Tibial artery (tissue), 4 donors: ENCODE measurements at regions of chr12 and their contacts with region 1.

Region 1: DNA sequence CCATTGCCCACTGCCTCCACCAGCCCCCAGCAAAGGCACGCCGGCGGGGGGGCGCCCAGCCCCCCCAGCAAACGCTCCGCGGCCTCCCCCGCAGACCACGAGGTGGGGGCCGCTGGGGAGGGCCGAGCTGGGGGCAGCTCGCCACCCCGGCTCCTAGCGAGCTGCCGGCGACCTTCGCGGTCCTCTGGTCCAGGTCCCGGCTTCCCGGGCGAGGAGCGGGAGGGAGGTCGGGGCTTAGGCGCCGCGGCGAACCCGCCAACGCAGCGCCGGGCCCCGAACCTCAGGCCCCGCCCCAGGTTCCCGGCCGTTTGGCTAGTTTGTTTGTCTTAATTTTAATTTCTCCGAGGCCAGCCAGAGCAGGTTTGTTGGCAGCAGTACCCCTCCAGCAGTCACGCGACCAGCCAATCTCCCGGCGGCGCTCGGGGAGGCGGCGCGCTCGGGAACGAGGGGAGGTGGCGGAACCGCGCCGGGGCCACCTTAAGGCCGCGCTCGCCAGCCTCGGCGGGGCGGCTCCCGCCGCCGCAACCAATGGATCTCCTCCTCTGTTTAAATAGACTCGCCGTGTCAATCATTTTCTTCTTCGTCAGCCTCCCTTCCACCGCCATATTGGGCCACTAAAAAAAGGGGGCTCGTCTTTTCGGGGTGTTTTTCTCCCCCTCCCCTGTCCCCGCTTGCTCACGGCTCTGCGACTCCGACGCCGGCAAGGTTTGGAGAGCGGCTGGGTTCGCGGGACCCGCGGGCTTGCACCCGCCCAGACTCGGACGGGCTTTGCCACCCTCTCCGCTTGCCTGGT is at the start of gene CDKN1B:
- DNase-seq: peak; percentile 94 to 98
- H3K4me3 ChIP-seq: peak within 1 kb of the TSS; percentile 83 to 99
- H3K27ac ChIP-seq: peak within 1 kb of the TSS; percentile 99 to 100
- H3K4me1 ChIP-seq: peaks cover 0 to 51% (median 30%) of the 10 kb centered on the region in 4 donors
- H3K27me3 ChIP-seq: no peaks in the 10 kb centered on the region
- CTCF ChIP-seq: no peak

Region 2: DNA sequence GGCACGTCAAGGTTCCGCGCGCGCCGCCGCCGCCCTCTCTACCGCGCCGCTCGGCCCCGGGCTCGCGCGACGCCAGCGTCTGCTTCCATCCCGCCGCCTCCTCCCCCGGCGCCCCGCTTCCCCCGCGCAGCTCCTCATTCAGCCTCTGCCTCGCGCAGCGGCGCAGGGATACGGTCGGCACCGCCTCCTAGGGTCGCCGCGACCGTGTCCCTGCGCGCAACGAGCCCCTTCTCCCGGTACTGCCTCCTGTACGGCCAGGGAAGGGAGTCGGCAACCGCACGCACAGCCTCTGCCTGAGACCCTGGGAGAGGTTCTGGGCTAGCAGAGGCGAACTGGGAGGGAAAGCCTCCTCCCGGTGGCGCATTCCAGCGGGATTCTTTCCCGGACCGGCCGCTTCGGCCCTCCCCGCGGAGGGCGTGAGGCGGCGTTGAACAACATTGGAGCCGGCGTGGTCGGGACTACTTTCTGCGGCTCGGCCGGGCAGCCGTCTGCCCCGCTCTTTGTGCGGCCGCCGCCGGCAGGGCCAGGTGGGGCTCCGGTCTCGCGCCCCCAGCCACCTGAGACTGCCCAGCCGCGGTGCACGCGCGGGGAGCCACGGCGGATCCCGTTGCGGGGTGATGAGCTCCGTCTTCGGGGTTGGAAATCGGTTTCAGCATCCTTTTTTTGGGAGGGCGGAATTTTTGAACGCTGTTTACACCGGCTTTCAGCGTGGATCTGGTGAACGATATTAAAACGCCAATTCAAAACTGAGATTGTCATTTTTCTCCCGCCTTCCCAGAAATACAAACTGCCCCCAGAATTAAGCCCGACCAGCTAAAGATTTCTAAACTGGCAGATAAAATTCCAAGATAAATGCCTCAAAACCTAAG is 449.9 kb before region 1 on chr12 and contains the start of gene LRP6:
- intact Hi-C with region 1: loop called (anchors 10 kb)
- DNase-seq: peak; percentile 83 to 92
- H3K4me3 ChIP-seq: peak within 1 kb of the TSS; percentile 64 to 87
- H3K27ac ChIP-seq: peak within 1 kb of the TSS; percentile 97 to 99
- H3K4me1 ChIP-seq: peaks cover 0 to 20% (median 8%) of the 10 kb centered on the region in 4 donors
- H3K27me3 ChIP-seq: no peaks in the 10 kb centered on the region
- CTCF ChIP-seq: no peak

Region 3: DNA sequence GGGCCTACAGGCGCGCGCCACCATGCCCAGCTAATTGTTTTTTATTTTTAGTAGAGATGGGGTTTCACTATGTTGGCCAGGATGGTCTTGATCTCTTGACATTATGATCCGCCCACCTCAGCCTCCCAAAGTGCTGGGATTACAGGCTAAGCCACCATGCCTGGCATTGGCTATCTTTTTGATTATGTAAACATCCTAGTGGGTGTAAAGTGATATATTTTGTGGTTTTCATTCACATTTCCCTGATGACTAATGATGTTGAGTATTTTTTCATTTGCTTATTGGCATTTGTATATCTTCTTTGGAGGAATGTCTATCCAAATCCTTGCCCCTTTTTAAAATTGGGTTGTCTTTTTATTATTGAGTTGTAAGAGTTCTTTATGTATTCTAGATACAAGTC is 89.0 kb before region 1 on chr12:
- intact Hi-C with region 1: no loop called
- DNase-seq: no peak
- H3K4me3 ChIP-seq: no peak overlapping the region
- H3K27ac ChIP-seq: no peak overlapping the region
- H3K4me1 ChIP-seq: peaks cover 0 to 16% (median 5%) of the 10 kb centered on the region in 4 donors
- H3K27me3 ChIP-seq: no peaks in the 10 kb centered on the region
- CTCF ChIP-seq: no peak

Region 4: GRCh38 chr12:12776261-12776660 is 59.3 kb after region 1 on chr12:
- intact Hi-C with region 1: no loop called
- DNase-seq: no peak
- H3K4me3 ChIP-seq: no peak overlapping the region
- H3K27ac ChIP-seq: no peak overlapping the region
- H3K4me1 ChIP-seq: no peaks in the 10 kb centered on the region
- H3K27me3 ChIP-seq: no peaks in the 10 kb centered on the region
- CTCF ChIP-seq: no peak

Region 5: DNA sequence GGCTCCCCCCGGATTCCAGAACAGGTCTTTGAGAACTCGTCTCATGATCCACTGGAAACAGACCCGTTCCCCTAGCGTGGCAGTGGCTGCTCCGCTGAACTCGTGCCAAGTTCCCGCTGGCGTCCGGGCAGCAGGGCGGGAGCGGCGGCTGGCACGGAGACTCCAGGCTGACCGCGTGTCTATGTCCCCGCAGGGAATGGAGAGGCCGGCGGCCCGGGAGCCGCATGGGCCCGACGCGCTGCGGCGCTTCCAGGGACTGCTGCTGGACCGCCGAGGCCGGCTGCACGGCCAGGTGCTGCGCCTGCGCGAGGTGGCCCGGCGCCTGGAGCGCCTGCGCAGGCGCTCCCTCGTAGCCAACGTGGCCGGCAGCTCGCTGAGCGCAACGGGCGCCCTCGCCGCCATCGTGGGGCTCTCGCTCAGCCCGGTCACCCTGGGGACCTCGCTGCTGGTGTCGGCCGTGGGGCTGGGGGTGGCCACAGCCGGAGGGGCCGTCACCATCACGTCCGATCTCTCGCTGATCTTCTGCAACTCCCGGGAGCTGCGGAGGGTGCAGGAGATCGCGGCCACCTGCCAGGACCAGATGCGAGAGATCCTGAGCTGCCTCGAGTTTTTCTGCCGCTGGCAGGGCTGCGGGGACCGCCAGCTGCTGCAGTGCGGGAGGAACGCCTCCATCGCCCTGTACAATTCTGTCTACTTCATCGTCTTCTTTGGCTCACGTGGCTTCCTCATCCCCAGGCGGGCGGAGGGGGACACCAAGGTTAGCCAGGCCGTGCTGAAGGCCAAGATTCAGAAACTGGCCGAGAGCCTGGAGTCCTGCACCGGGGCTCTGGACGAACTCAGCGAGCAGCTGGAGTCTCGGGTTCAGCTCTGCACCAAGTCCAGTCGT is 70.0 kb after region 1 on chr12:
- intact Hi-C with region 1: loop called (anchors 5 kb)
- DNase-seq: peak; percentile 75 to 92
- H3K4me3 ChIP-seq: peak overlapping the region; percentile 63 to 64
- H3K27ac ChIP-seq: peak overlapping the region; percentile 80 to 91
- H3K4me1 ChIP-seq: peaks cover 0 to 48% (median 21%) of the 10 kb centered on the region in 4 donors
- H3K27me3 ChIP-seq: no peaks in the 10 kb centered on the region
- CTCF ChIP-seq: peak; percentile 12 to 52